Mammary epithelial cell (primary cell): ENCODE measurements at regions of chr1 and their contacts with region 1.

Region 1: GRCh38 chr1:179217943-179218507 is 11.5 kb downstream of the ABL2 start:
- DNase-seq: no peak
- H3K4me3 ChIP-seq: no peak overlapping the region
- H3K27ac ChIP-seq: no peak overlapping the region
- H3K4me1 ChIP-seq: no peaks in the 10 kb centered on the region
- H3K27me3 ChIP-seq: no peaks in the 10 kb centered on the region
- CTCF ChIP-seq: no peak

Region 2: DNA sequence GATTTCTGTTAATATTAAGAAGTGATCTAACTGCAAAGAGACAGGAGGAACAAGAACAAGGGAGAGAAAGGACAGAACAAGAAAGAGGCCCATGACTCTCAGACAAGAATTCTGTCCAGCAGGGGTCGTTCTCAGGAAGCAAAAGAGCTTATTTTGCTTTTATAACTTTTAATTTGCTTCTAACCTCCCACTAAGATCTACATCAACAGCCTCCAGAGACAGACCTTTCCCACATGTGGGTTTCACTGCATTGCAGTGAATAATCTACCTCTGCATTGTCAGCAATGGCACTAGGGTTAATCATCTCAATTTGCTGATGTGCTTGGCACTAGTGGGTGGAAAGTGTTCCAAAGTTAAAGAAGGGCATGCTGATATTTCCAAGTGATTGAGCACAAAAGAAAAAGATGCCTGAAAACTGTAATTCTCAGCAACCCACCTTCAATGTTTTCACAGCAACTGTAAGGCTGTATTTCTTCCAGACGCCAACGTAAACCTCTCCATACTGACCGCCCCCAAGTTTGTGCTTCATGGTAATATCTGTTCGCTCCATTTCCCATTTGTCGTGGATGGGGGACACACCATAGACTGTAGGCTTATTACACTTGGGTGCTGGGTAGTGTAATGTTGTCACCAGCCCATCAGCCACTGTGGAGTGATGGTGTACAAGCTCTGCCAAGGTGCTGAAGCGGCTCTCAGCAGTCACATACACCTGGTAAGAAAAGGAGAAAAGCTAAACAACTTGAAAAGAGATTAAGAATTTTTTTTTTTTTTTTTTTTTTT is 96.7 kb before region 1 on chr1:
- CTCF ChIA-PET with region 1: no interaction called
- dilution Hi-C with region 1: no loop called
- in situ Hi-C with region 1: loop called in 1 of 2 experiments (anchors 25 kb)
- intact Hi-C with region 1: no loop called
- DNase-seq: no peak
- H3K4me3 ChIP-seq: no peak overlapping the region
- H3K27ac ChIP-seq: no peak overlapping the region
- H3K4me1 ChIP-seq: peaks cover 21% of the 10 kb centered on the region
- H3K27me3 ChIP-seq: no peaks in the 10 kb centered on the region
- CTCF ChIP-seq: peak; percentile 55 to 64

Region 3: GRCh38 chr1:179177182-179177581 is 40.8 kb before region 1 on chr1:
- CTCF ChIA-PET with region 1: no interaction called
- dilution Hi-C with region 1: no loop called
- in situ Hi-C with region 1: no loop called
- intact Hi-C with region 1: no loop called
- DNase-seq: no peak
- H3K4me3 ChIP-seq: no peak overlapping the region
- H3K27ac ChIP-seq: peak overlapping the region; percentile 41
- H3K4me1 ChIP-seq: peaks cover 33% of the 10 kb centered on the region
- H3K27me3 ChIP-seq: no peaks in the 10 kb centered on the region
- CTCF ChIP-seq: no peak